MCF 10A (cell line): ENCODE measurements at regions of chr15 and their contacts with region 1.

Region 1: DNA sequence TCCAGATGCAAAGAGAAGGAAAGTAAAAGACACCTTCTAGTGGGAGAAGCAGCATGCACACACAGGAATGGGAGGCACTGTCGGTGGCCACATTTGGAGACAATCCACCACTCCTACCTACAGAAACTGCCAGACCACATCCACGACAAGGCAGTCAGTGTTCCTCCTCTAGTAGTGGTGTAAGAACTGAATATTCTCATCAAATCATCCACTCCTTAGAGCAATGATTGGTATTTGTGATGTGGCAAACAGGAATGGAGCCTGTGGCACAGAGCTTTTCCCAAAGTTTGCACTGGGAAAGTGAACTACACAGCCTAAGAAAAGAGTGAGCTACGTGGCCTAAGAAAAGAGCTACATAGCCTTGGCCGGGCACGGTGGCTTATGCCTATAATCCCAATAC is 5.1 kb upstream of the SPINT1 start:
- DNase-seq: no peak
- H3K4me3 Mint-ChIP-seq: no peak overlapping the region
- H3K27ac Mint-ChIP-seq: no peak overlapping the region
- H3K4me1 Mint-ChIP-seq: peaks cover 8% of the 10 kb centered on the region
- H3K27me3 Mint-ChIP-seq: no peaks in the 10 kb centered on the region
- CTCF ChIP-seq: no peak

Region 2: GRCh38 chr15:40807028-40807887 is 31.5 kb before region 1 on chr15 and contains the starts of genes DNAJC17 and ZFYVE19:
- CTCF ChIA-PET with region 1: interaction called, 3 read pairs
- POLR2A ChIA-PET with region 1: interaction called, 47 read pairs
- intact Hi-C with region 1: no loop called
- DNase-seq: peak; percentile 98
- H3K4me3 Mint-ChIP-seq: peak within 1 kb of the TSS; percentile 81
- H3K27ac Mint-ChIP-seq: peak within 1 kb of the TSS; percentile 83
- H3K4me1 Mint-ChIP-seq: peaks cover 12% of the 10 kb centered on the region
- H3K27me3 Mint-ChIP-seq: no peaks in the 10 kb centered on the region
- CTCF ChIP-seq: peak; percentile 10
- total RNA-seq, gene DNAJC17: 55.1 and 58.1 TPM in 2 replicates
- total RNA-seq, gene ZFYVE19: 19.2 and 19.9 TPM in 2 replicates

Region 3: DNA sequence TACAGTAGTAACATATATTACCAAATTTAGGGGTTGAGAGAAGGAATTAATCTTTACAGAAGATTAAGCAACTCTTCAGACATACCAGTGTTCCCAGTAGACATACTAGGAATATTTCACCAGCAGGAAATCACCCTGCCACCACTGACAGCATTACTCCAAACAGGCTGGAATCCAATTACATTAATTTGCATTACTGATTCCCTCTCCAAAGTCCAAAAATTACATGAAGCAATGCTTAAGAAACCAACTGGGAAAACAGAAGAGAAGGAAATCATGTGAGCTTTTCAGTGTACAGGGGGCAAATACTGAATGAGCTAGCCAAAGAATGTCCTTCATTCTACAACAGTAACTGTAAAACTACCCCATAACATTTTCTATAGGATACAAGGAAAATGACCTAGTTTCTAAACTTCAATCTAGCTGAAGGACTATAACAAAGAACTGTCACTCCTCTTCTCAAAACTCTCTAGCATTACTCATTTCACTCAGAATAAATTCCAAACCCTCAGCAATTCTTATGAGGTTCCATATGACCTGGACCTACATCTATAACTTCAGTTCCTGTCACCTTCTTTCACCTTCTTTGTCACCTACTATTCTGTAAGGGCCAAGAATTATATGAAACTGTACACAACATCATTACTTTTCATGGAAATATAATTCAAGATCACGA is 204.6 kb after region 1 on chr15:
- CTCF ChIA-PET with region 1: no interaction called
- POLR2A ChIA-PET with region 1: no interaction called
- intact Hi-C with region 1: no loop called
- DNase-seq: peak; percentile 34
- H3K4me3 Mint-ChIP-seq: no peak overlapping the region
- H3K27ac Mint-ChIP-seq: no peak overlapping the region
- H3K4me1 Mint-ChIP-seq: peaks cover 10% of the 10 kb centered on the region
- H3K27me3 Mint-ChIP-seq: no peaks in the 10 kb centered on the region
- CTCF ChIP-seq: no peak